AG04449 (cell line): ENCODE measurements at regions of chr10 and their contacts with region 1.

Region 1: GRCh38 chr10:3785257-3785850 is 345 bp upstream of the KLF6 start:
- DNase-seq: no peak
- H3K4me3 ChIP-seq: peak overlapping the region; percentile 94
- CTCF ChIP-seq: no peak

Region 2: DNA sequence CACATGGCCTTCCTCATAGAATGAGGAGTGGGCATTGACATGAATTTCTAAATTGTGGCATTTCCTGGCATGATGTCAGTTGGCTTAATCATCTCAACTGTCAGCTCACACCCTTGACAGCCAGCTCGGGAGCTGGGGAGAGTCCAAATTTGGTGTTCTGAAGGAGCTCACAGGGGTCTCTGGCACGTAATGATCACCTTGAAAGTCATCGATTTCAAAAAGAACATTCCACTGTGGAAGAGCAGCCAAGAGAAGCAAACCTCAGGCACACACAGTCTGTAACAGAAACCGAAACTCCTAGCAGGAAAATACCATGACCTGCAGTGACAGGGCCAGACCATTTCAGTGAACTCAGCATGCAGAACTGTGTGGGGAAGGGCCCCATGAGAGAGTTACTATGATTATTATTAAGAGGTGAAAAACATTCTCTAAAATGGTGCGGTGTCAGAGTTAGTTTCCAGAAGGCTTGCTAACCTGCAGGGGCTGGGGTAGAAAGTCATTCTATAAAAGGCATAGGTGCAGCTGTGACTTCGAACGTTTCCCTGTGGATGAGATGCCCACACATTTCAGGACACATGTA is 26.0 kb after region 1 on chr10:
- CTCF ChIA-PET with region 1: no interaction called
- POLR2A ChIA-PET with region 1: interaction called, 22 read pairs
- DNase-seq: no peak
- H3K4me3 ChIP-seq: peak overlapping the region; percentile 24; the same call in 1 of the 2 replicates
- CTCF ChIP-seq: no peak

Region 3: GRCh38 chr10:3852147-3852904 is 67.0 kb after region 1 on chr10:
- CTCF ChIA-PET with region 1: no interaction called
- POLR2A ChIA-PET with region 1: interaction called, 35 read pairs
- DNase-seq: peak; percentile 97
- H3K4me3 ChIP-seq: no peak overlapping the region
- CTCF ChIP-seq: no peak

Region 4: DNA sequence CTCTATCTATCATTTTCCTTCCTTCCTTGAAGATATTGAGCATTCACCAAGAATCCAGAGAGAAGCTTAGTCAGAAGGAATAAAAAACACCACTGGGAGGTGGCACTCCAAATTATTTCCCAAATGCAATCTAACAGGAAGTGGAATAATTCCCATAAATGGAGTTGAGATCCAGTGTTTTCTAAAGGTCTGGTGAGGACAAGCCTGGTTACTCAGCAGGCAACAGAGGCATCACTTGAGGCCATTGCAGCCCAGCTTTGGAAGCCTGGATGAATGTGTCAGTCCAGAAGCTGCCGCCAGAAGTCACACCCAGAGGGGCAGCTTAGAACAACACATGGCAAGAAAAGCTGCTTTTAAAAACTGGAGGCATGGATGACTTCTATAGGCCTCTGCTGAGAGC is 288.6 kb after region 1 on chr10:
- CTCF ChIA-PET with region 1: interaction called, 3 read pairs
- POLR2A ChIA-PET with region 1: interaction called, 18 read pairs
- DNase-seq: peak; percentile 67
- H3K4me3 ChIP-seq: no peak overlapping the region
- CTCF ChIP-seq: no peak

Region 5: DNA sequence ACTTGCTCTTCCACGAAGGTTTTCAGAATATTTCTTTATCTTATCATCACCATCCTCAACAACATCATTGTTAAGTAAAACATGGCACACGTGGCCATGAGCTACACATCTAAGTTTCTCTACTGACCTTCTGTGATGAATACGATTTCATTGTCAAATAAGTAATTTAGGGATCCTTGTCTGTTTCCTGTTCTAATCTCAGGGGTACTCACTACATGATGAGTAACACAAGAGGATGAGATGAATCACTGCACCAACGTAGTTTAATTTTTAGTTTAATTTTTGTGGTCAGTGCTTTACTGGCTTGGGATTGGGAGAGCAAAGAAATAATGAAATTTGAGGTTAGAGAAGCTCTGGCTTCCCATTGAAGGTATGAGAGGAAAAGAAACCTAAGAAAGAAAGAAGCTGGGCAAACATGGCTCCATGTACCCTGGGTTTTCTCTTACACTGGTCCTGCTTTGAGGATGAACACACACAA is 461.6 kb after region 1 on chr10:
- CTCF ChIA-PET with region 1: interaction called, 4 read pairs
- POLR2A ChIA-PET with region 1: interaction called, 18 read pairs
- DNase-seq: peak; percentile 94
- H3K4me3 ChIP-seq: no peak overlapping the region
- CTCF ChIP-seq: no peak